H1 (cell line): ENCODE measurements at regions of chr6 and their contacts with region 1.

Region 1: GRCh38 chr6:29834564-29835436 is 7.2 kb downstream of the HLA-G start:
- DNase-seq: peak in 1 of 2 experiments; percentile 94
- H3K4me3 ChIP-seq: no peak overlapping the region
- H3K27ac ChIP-seq: no peak overlapping the region
- H3K4me1 ChIP-seq: no peaks in the 10 kb centered on the region
- H3K27me3 ChIP-seq: peaks cover 0 to 5% (median under 1%) of the 10 kb centered on the region in 4 experiments; a peak in 3 of 7 replicates
- CTCF ChIP-seq: peak; percentile 77 to 94 (median 82)
- EP300 ChIP-seq: no peak
- POLR2A ChIP-seq: no peak
- RAD21 ChIP-seq: peak; percentile 95 to 98

Region 2: GRCh38 chr6:29502597-29502996 is 332.2 kb before region 1 on chr6:
- CTCF ChIA-PET with region 1: no interaction called
- POLR2A ChIA-PET with region 1: no interaction called
- DNase-seq: peak in 1 of 2 experiments; percentile 14
- H3K4me3 ChIP-seq: no peak overlapping the region
- H3K27ac ChIP-seq: no peak overlapping the region
- H3K4me1 ChIP-seq: no peaks in the 10 kb centered on the region; a peak in 1 of 7 replicates
- H3K27me3 ChIP-seq: no peaks in the 10 kb centered on the region
- CTCF ChIP-seq: no peak
- EP300 ChIP-seq: no peak
- POLR2A ChIP-seq: no peak
- RAD21 ChIP-seq: no peak

Region 3: GRCh38 chr6:29649701-29650673 is 184.8 kb before region 1 on chr6:
- CTCF ChIA-PET with region 1: interaction called, 15 read pairs
- POLR2A ChIA-PET with region 1: no interaction called
- DNase-seq: peak; percentile 94 to 99
- H3K4me3 ChIP-seq: peak overlapping the region; percentile 29 to 66 (median 56); a peak in 7 of 8 replicates
- H3K27ac ChIP-seq: peak overlapping the region; percentile 69; the same call in 1 of the 2 replicates
- H3K4me1 ChIP-seq: peaks cover 3 to 17% (median 10%) of the 10 kb centered on the region in 4 experiments; a peak in 6 of 7 replicates
- H3K27me3 ChIP-seq: no peaks in the 10 kb centered on the region
- CTCF ChIP-seq: peak; percentile 69 to 94 (median 74)
- EP300 ChIP-seq: no peak
- POLR2A ChIP-seq: peak in 1 of 2 experiments; percentile 93; a peak in 2 of 3 replicates
- RAD21 ChIP-seq: peak; percentile 52 to 53

Region 4: DNA sequence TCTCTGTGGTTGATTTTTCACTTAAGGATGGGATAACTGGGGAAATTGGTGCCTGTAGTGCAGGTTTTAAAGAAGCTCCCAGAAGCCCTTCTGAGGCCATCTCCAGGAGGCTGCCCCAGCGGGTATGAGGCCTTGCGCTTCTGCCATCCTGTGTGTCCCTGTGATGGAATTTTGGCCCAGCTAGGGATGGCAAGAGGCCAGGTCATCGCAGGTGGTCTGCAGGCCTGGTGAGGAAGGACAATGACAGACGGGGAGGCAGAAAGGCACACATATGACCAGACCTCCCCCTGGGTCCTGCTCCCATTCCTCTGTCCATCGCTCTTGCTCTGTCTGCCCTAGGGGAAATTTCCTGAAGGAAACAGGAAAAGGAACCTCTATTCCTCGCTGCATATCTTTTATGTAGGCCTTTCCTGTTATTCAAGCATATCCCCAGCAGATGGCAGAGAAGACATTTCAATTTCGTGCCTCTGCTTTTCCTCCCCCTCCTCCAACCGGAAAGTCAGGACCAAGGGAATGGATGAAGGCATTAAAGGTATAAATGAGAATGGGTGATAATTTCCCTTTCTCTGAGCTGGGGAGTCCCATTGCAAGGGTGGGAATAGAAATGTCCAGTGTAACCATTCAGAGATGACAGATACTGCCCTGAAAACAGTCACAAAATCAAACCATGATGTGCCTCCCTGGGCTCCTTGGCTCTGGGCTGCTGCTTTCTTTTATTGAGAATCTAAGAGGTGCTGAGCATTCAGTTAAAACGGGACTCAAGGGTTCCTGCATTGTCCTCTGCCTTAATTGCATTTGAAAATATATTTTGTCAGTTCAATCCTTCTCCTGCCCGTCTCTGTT is 129.2 kb before region 1 on chr6:
- CTCF ChIA-PET with region 1: interaction called, 19 read pairs
- POLR2A ChIA-PET with region 1: no interaction called
- DNase-seq: peak in 1 of 2 experiments; percentile 52
- H3K4me3 ChIP-seq: no peak overlapping the region
- H3K27ac ChIP-seq: no peak overlapping the region
- H3K4me1 ChIP-seq: no peaks in the 10 kb centered on the region; a peak in 1 of 7 replicates
- H3K27me3 ChIP-seq: no peaks in the 10 kb centered on the region
- CTCF ChIP-seq: peak in 2 of 3 experiments; percentile 65 to 72; a peak in 3 of 4 replicates
- EP300 ChIP-seq: no peak
- POLR2A ChIP-seq: no peak
- RAD21 ChIP-seq: peak; percentile 87 to 89

Region 5: DNA sequence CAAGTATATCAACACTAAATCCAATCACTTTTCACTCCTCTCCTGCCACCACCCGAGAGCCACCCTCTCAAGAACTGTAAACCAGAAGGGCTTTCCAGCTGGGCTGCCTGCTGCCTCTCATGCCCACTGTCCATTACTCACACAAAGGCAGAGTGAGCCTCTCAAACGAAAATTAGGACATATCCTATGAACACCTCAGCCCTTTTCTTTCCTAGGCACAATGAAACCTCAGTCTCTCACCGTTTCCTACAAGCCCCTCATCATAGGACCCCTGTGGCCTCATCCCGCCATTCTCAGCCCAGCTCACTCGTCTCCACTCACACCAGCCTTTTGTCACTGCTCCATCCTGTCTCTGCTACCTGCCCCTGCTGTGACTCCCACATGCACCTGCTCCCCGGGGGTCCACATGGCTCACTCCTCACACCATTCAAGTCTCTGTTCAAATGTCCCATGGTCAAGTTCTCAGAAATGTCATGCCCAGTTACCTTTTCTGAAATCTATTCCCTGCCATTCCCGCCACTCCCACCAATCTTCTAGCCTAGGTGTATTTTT is 104.1 kb before region 1 on chr6:
- CTCF ChIA-PET with region 1: interaction called, 100 read pairs
- POLR2A ChIA-PET with region 1: no interaction called
- DNase-seq: no peak
- H3K4me3 ChIP-seq: no peak overlapping the region
- H3K27ac ChIP-seq: no peak overlapping the region
- H3K4me1 ChIP-seq: no peaks in the 10 kb centered on the region
- H3K27me3 ChIP-seq: peaks cover 0 to 2% (median under 1%) of the 10 kb centered on the region in 4 experiments; a peak in 3 of 7 replicates
- CTCF ChIP-seq: no peak
- EP300 ChIP-seq: no peak
- POLR2A ChIP-seq: no peak
- RAD21 ChIP-seq: no peak

Region 6: GRCh38 chr6:29743568-29743967 is 91.2 kb before region 1 on chr6:
- CTCF ChIA-PET with region 1: interaction called, 100 read pairs
- POLR2A ChIA-PET with region 1: interaction called, 9 read pairs
- DNase-seq: no peak
- H3K4me3 ChIP-seq: no peak overlapping the region
- H3K27ac ChIP-seq: no peak overlapping the region
- H3K4me1 ChIP-seq: peaks cover 0 to 11% (median 6%) of the 10 kb centered on the region in 4 experiments; a peak in 4 of 7 replicates
- H3K27me3 ChIP-seq: peaks cover 3 to 13% (median 12%) of the 10 kb centered on the region in 4 experiments
- CTCF ChIP-seq: no peak
- EP300 ChIP-seq: no peak
- POLR2A ChIP-seq: no peak
- RAD21 ChIP-seq: no peak

Region 7: GRCh38 chr6:29763491-29764289 is 71.1 kb before region 1 on chr6:
- CTCF ChIA-PET with region 1: interaction called, 10 read pairs
- POLR2A ChIA-PET with region 1: interaction called, 3 read pairs
- DNase-seq: no peak
- H3K4me3 ChIP-seq: no peak overlapping the region
- H3K27ac ChIP-seq: no peak overlapping the region
- H3K4me1 ChIP-seq: peaks cover 5 to 17% (median 11%) of the 10 kb centered on the region in 4 experiments; a peak in 6 of 7 replicates
- H3K27me3 ChIP-seq: no peaks in the 10 kb centered on the region
- CTCF ChIP-seq: no peak
- EP300 ChIP-seq: no peak
- POLR2A ChIP-seq: no peak
- RAD21 ChIP-seq: no peak

Region 8: GRCh38 chr6:29870104-29870503 is 35.3 kb after region 1 on chr6:
- CTCF ChIA-PET with region 1: no interaction called
- POLR2A ChIA-PET with region 1: no interaction called
- DNase-seq: no peak
- H3K4me3 ChIP-seq: no peak overlapping the region
- H3K27ac ChIP-seq: no peak overlapping the region
- H3K4me1 ChIP-seq: no peaks in the 10 kb centered on the region
- H3K27me3 ChIP-seq: peaks cover 0 to 2% (median 0%) of the 10 kb centered on the region in 4 experiments; a peak in 2 of 7 replicates
- CTCF ChIP-seq: no peak
- EP300 ChIP-seq: no peak
- POLR2A ChIP-seq: no peak
- RAD21 ChIP-seq: no peak